ENCODE measurements at regions of chr10 and their contacts with region 1.

Region 1: GRCh38 chr10:6929148-6929830 is 349.2 kb upstream of the PRKCQ start:
- DNase-seq: no peak
- ATAC-seq: no peak
- H3K4me3 ChIP-seq: no peak overlapping the region
- H3K4me3 Mint-ChIP-seq: peak overlapping the region in 2 of 10 donors; percentile 1 to 35
- H3K27ac ChIP-seq: no peak overlapping the region
- H3K27ac Mint-ChIP-seq: peak overlapping the region in 2 of 9 donors; percentile 23 to 53
- H3K4me1 ChIP-seq: peaks cover 26 to 46% of the 10 kb centered on the region in 2 donors
- H3K4me1 Mint-ChIP-seq: peaks cover 25 to 46% (median 34%) of the 10 kb centered on the region in 7 donors
- H3K27me3 ChIP-seq: no peaks in the 10 kb centered on the region
- H3K27me3 Mint-ChIP-seq: peaks cover 0 to 10% (median 4%) of the 10 kb centered on the region in 5 donors

Region 2: DNA sequence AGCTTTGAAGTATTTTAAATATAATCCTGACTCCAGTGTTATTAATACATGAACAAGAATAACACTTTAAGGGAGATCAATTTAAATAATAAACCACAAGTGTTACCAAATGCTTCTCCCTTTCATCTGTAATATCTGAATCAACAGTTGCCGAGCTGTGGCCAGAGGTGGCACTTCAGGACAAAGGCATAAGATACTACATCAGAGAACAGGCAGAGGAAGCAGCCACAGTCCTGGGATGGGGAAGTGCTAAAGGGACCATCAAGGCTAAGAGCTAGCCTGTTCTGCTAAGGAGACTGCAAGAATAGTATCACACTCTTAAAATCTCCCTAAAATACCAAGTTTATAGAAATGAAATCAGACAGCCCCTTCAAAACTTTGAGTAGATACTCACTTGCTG is 29.0 kb after region 1 on chr10:
- CTCF ChIA-PET with region 1: no interaction called
- POLR2A ChIA-PET with region 1: no interaction called
- intact Hi-C with region 1: no loop called
- DNase-seq: no peak
- ATAC-seq: peak; percentile 71
- H3K4me3 ChIP-seq: no peak overlapping the region
- H3K4me3 Mint-ChIP-seq: no peak overlapping the region
- H3K27ac ChIP-seq: no peak overlapping the region
- H3K27ac Mint-ChIP-seq: peak overlapping the region in 1 of 9 donors; percentile 41
- H3K4me1 ChIP-seq: peaks cover 4 to 28% of the 10 kb centered on the region in 2 donors
- H3K4me1 Mint-ChIP-seq: peaks cover 0 to 18% (median 12%) of the 10 kb centered on the region in 7 donors
- H3K27me3 ChIP-seq: no peaks in the 10 kb centered on the region
- H3K27me3 Mint-ChIP-seq: peaks cover 0 to 4% (median 0%) of the 10 kb centered on the region in 5 donors

Region 3: GRCh38 chr10:6973899-6974298 is 44.6 kb after region 1 on chr10:
- CTCF ChIA-PET with region 1: no interaction called
- POLR2A ChIA-PET with region 1: no interaction called
- intact Hi-C with region 1: loop called in 1 of 2 experiments (anchors 2 kb)
- DNase-seq: peak in 6 of 9 donors; percentile 7 to 48 (median 32)
- ATAC-seq: peak; percentile 75
- H3K4me3 ChIP-seq: no peak overlapping the region
- H3K4me3 Mint-ChIP-seq: peak overlapping the region in 1 of 10 donors; percentile 56
- H3K27ac ChIP-seq: no peak overlapping the region
- H3K27ac Mint-ChIP-seq: peak overlapping the region in 2 of 9 donors; percentile 15 to 65
- H3K4me1 ChIP-seq: peaks cover 0 to 14% of the 10 kb centered on the region in 2 donors
- H3K4me1 Mint-ChIP-seq: peaks cover 2 to 16% (median 9%) of the 10 kb centered on the region in 7 donors
- H3K27me3 ChIP-seq: no peaks in the 10 kb centered on the region
- H3K27me3 Mint-ChIP-seq: peaks cover 0 to 26% (median 0%) of the 10 kb centered on the region in 5 donors

Region 4: GRCh38 chr10:6980353-6980752 is 51.1 kb after region 1 on chr10:
- CTCF ChIA-PET with region 1: no interaction called
- POLR2A ChIA-PET with region 1: no interaction called
- intact Hi-C with region 1: loop called (anchors 2 to 5 kb)
- DNase-seq: no peak
- ATAC-seq: no peak
- H3K4me3 ChIP-seq: no peak overlapping the region
- H3K4me3 Mint-ChIP-seq: no peak overlapping the region
- H3K27ac ChIP-seq: no peak overlapping the region
- H3K27ac Mint-ChIP-seq: no peak overlapping the region
- H3K4me1 ChIP-seq: no peaks in the 10 kb centered on the region
- H3K4me1 Mint-ChIP-seq: peaks cover 0 to 8% (median 0%) of the 10 kb centered on the region in 7 donors
- H3K27me3 ChIP-seq: no peaks in the 10 kb centered on the region
- H3K27me3 Mint-ChIP-seq: peaks cover 0 to 32% (median 5%) of the 10 kb centered on the region in 5 donors

Region 5: DNA sequence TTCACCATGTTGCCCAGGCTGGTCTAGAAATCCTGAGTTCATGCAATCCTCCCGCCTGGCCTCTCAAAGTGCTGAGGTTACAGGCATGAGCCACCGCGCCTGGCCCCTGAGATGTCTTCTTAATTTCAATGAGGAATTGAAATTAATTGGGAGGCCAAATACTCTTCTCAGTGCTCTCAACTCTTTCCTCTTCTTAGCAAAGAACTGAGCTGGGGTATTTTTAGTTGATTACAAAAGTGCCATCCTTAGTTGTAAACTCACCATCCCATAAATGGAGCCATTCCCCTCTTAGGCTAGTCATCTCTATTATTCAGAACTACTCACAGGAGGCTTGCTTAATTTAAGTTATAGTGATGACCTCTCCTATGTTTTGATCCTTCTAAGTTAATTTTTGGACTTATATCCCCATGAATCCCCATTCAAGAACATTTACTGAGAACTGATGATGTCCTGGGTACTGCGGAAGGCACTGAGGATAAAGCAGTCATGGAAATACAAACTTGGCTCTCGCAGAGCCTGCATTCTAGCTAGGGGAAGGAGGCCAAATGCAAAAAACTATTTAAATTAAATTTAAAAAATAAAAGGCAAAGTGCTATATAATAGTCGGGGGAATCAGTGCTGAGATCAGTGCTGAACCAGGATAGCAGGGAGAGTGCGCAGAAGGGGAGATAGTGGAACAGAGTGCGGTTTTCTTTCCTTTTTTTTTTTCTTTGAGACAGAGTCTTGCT is 336.3 kb after region 1 on chr10:
- CTCF ChIA-PET with region 1: no interaction called
- POLR2A ChIA-PET with region 1: no interaction called
- intact Hi-C with region 1: loop called in 1 of 2 experiments (anchors 2 kb)
- DNase-seq: no peak
- ATAC-seq: no peak
- H3K4me3 ChIP-seq: no peak overlapping the region
- H3K4me3 Mint-ChIP-seq: no peak overlapping the region
- H3K27ac ChIP-seq: no peak overlapping the region
- H3K27ac Mint-ChIP-seq: peak overlapping the region in 5 of 9 donors; percentile 36 to 84 (median 76)
- H3K4me1 ChIP-seq: peaks cover 6 to 13% of the 10 kb centered on the region in 2 donors
- H3K4me1 Mint-ChIP-seq: peaks cover 16 to 52% (median 38%) of the 10 kb centered on the region in 7 donors
- H3K27me3 ChIP-seq: no peaks in the 10 kb centered on the region
- H3K27me3 Mint-ChIP-seq: no peaks in the 10 kb centered on the region

Region 6: GRCh38 chr10:7787857-7788638 is 858.8 kb after region 1 on chr10 and contains the starts of genes ATP5F1C and KIN:
- CTCF ChIA-PET with region 1: no interaction called
- POLR2A ChIA-PET with region 1: no interaction called
- intact Hi-C with region 1: loop called in 1 of 2 experiments (anchors 1 kb)
- DNase-seq: peak; percentile 93 to 98 (median 96)
- ATAC-seq: peak; percentile 98
- H3K4me3 ChIP-seq: peak within 1 kb of the TSS; percentile 79
- H3K4me3 Mint-ChIP-seq: no peak within 1 kb of the TSS
- H3K27ac ChIP-seq: peak within 1 kb of the TSS; percentile 84
- H3K27ac Mint-ChIP-seq: peak within 1 kb of the TSS in 1 of 9 donors; percentile 90
- H3K4me1 ChIP-seq: peaks cover 21 to 28% of the 10 kb centered on the region in 2 donors
- H3K4me1 Mint-ChIP-seq: peaks cover 47 to 77% (median 57%) of the 10 kb centered on the region in 7 donors
- H3K27me3 ChIP-seq: no peaks in the 10 kb centered on the region
- H3K27me3 Mint-ChIP-seq: no peaks in the 10 kb centered on the region
- total RNA-seq, gene ATP5F1C: 113 to 290 (median 122) TPM
- total RNA-seq, gene KIN: 7.2 to 18.4 (median 14.3) TPM

Measured in naive thymus-derived CD4-positive, alpha-beta T cell (primary cell).